PC-3 (cell line): ENCODE measurements at regions of chr12 and their contacts with region 1.

Region 1: DNA sequence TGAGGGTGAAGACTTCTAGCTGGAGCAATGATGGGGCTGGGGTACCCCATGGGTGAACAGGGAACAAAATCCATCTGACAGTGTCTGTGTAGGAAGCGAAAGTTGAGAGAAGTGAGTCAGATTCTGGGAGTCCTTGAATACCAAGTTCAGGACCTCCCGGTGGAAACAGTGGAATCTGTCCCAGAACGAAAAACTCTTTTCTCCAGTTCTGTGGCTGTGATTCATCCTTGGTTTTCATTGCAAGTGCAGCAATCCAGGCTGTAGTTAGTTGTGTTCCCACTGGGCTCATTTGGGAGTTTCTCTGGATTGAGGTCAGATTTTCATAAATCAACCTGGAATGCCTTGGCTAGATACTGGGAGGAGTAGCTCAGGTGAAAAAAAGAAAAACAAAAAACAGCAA is 120.7 kb downstream of the C12orf75 start:
- DNase-seq: no peak
- ATAC-seq: no peak
- H3K4me3 ChIP-seq: no peak overlapping the region
- H3K27ac ChIP-seq: no peak overlapping the region
- H3K4me1 ChIP-seq: peaks cover 11% of the 10 kb centered on the region
- H3K27me3 ChIP-seq: no peaks in the 10 kb centered on the region
- CTCF ChIP-seq: no peak

Region 2: DNA sequence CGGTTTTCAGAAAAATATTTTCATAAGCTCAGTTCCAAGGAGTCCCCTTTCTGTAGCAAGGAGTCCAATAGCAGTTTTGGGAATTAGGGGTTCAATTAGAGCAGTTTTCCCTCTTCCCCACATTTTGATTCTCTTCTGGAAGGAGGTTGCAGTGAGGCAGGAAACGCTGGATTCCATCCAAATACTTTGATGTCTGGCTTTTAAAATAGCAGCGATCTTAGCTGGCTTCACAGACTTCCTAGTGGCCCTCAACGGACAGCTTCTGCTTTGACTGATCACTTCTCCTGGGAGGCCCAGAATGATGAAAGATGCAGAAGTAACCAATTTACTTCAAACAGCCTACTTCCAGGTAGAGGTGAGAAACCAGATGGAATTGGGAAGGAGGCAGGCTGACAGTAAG is 57.6 kb before region 1 on chr12:
- CTCF ChIA-PET with region 1: no interaction called
- POLR2A ChIA-PET with region 1: no interaction called
- intact Hi-C with region 1: no loop called
- DNase-seq: no peak
- ATAC-seq: no peak
- H3K4me3 ChIP-seq: no peak overlapping the region
- H3K27ac ChIP-seq: no peak overlapping the region
- H3K4me1 ChIP-seq: no peaks in the 10 kb centered on the region
- H3K27me3 ChIP-seq: no peaks in the 10 kb centered on the region
- CTCF ChIP-seq: no peak

Region 3: DNA sequence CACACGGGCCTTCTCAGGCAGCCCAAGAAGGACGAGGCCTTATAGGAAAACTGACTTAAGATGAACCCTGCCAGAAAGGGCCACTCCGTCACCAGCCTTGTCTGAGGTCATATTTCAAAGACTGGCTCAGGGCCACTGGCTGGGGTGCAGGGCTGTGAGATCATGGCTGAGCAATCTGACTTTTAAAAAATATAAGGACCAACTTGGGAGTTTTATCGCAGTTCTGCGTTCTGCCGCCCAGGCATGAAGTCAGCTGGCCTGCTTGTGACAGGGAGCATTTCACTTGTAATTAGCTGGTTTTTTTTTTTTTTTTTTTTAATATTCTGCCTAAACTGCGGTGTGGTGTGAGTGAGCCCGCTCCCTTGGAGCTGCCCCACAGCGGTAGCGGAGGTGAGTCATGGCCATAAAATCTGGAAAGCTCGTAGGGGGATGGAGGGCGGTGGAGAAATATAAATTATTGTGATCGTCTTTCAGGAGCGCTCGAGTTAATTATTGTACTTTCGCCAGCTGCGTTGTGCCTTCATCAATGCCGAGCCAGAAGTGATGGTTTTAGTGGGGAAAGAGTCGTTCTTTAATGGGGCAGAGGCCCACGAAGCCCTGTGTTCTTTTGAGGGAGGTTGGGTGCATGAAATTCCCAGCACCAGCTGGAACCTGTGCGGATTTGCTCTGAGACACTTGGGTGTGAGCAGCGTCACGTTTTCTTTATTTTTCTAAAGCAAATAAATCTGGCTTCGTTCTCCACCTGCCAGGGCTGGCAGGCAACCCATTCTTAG is 111.2 kb after region 1 on chr12:
- CTCF ChIA-PET with region 1: interaction called, 5 read pairs
- POLR2A ChIA-PET with region 1: no interaction called
- intact Hi-C with region 1: loop called (anchors 5 kb)
- DNase-seq: peak; percentile 96
- ATAC-seq: peak; percentile 89
- H3K4me3 ChIP-seq: peak overlapping the region; percentile 60
- H3K27ac ChIP-seq: peak overlapping the region; percentile 87
- H3K4me1 ChIP-seq: peaks cover 21% of the 10 kb centered on the region
- H3K27me3 ChIP-seq: no peaks in the 10 kb centered on the region
- CTCF ChIP-seq: 0 out of 2 replicates have a peak, but pooled peaks have one; percentile 14

Region 4: DNA sequence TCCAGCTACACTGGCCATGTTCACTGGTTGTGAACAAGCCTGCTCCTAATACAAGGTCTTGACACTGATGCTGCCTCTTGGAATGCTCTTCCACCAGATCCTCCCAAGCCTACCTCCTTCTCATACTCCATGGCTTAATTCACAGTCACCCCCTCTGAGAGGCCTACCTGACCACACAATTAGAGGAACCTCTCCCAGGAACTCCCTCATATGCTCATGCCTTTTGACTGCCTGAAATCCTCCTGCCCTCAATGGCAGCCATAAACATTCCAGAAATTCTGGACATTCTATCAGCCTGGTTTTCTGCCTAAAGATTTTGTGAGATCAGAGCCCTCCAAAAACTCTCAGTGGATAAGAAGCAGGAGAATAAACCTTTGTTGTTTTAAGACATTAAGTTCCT is 219.5 kb after region 1 on chr12:
- CTCF ChIA-PET with region 1: no interaction called
- POLR2A ChIA-PET with region 1: no interaction called
- intact Hi-C with region 1: no loop called
- DNase-seq: no peak
- ATAC-seq: no peak
- H3K4me3 ChIP-seq: no peak overlapping the region
- H3K27ac ChIP-seq: no peak overlapping the region
- H3K4me1 ChIP-seq: no peaks in the 10 kb centered on the region
- H3K27me3 ChIP-seq: 0 out of 2 replicates have a peak, but pooled peaks cover under 1% of the 10 kb centered on the region
- CTCF ChIP-seq: no peak

Region 5: GRCh38 chr12:105705765-105706164 is 254.6 kb after region 1 on chr12:
- CTCF ChIA-PET with region 1: interaction called, 4 read pairs
- POLR2A ChIA-PET with region 1: no interaction called
- intact Hi-C with region 1: loop called (anchors 10 kb)
- DNase-seq: peak; percentile 61
- ATAC-seq: peak; percentile 46
- H3K4me3 ChIP-seq: no peak overlapping the region
- H3K27ac ChIP-seq: no peak overlapping the region
- H3K4me1 ChIP-seq: peaks cover 22% of the 10 kb centered on the region
- H3K27me3 ChIP-seq: no peaks in the 10 kb centered on the region
- CTCF ChIP-seq: peak; percentile 97